PC-3 (cell line): ENCODE measurements at regions of chr4 and their contacts with region 1.

Region 1: DNA sequence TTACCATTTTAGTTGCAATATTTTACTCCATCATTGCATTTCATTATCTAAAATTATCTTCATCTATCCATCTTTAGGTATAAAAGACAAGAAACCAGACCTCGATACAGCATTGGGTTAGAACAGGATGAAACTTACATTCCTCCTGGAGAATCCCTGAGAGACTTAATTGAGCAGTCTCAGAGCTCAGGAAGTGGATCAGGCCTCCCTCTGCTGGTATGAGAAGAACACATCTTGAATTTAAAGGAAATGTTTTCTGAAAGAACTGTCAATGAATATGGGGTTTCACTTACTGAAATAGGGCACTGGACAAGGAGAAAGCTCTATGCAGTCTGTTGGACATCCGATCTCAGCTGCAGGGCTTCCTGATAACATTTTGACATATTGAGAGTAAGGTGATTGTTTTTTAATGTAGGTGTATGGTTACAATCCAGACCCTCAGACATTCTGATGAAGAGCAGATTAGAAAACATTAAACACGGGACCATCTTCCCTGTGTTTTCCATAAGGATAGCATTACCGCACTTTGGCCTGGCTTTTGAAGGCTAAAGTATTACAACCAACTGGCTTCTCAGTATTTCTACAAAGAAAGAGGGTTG is 367.2 kb downstream of the BMPR1B start:
- DNase-seq: peak; percentile 70
- ATAC-seq: peak; percentile 81
- H3K4me3 ChIP-seq: no peak overlapping the region
- H3K27ac ChIP-seq: no peak overlapping the region
- H3K4me1 ChIP-seq: peaks cover 4% of the 10 kb centered on the region
- H3K27me3 ChIP-seq: no peaks in the 10 kb centered on the region
- CTCF ChIP-seq: peak; percentile 74

Region 2: DNA sequence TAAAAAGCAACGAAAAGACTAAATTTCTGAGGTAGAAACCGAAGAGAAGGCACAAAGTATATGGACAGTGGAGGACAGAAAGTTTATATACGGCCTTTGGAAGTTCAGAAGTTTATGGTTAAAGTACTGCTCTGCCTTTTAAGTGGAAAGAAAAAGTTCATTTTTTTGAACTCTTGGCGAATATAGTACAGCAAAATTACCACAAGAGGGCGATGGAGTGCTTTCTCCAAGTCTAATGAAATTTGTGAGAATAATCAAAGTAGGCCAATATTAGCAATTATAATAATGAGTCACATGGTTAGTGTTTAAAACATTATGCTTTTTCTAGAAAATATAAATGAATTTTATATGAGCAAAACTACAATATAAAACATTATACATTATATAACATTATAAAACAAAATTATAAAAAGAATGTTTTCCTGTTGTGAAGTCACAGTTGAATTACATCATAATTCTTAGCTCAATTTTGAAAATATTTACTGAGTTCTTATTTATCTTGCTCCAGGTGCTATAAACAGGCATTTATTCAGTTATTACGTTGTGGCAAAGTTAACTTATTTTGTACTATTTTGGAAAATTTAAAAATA is 503.4 kb before region 1 on chr4:
- CTCF ChIA-PET with region 1: no interaction called
- POLR2A ChIA-PET with region 1: no interaction called
- intact Hi-C with region 1: loop called (anchors 1 kb)
- DNase-seq: peak; percentile 67
- ATAC-seq: peak; percentile 24; the same call in 1 of the 2 replicates
- H3K4me3 ChIP-seq: no peak overlapping the region
- H3K27ac ChIP-seq: no peak overlapping the region
- H3K4me1 ChIP-seq: peaks cover 4% of the 10 kb centered on the region; the same call in 1 of the 2 replicates
- H3K27me3 ChIP-seq: no peaks in the 10 kb centered on the region
- CTCF ChIP-seq: peak; percentile 74

Region 3: DNA sequence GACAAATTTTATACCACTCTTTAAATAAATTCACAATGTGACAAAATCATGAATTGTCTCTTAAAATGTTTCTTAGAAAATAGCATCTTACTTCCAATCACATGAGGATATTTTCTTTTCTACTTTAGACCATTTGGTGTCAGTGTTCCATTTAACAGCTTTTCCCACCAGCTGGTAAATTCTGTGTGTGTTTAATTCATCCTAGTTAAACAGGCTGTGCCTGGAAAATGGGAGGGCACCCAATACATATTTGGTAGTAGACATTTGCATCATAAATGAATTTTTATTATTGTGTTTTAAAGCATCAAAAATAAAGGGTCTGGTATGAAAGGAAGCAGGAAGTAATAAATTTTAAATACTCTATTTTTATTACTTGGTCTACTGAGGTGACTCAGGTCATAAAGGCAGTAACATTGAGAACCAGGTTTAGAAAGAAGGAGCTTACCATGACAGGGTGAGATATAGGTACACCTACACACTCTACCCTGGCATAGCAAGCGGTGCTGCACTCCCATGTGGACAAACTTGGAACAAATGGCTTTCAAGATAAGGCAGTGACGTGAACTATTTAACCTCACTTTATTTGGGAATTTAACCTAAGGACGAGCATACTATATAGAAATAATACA is 22.7 kb before region 1 on chr4:
- CTCF ChIA-PET with region 1: interaction called, 6 read pairs
- POLR2A ChIA-PET with region 1: interaction called, 3 read pairs
- intact Hi-C with region 1: loop called (anchors 1 kb)
- DNase-seq: peak; percentile 68
- ATAC-seq: peak; percentile 93
- H3K4me3 ChIP-seq: no peak overlapping the region
- H3K27ac ChIP-seq: peak overlapping the region; percentile 50
- H3K4me1 ChIP-seq: peaks cover 33% of the 10 kb centered on the region
- H3K27me3 ChIP-seq: no peaks in the 10 kb centered on the region
- CTCF ChIP-seq: 0 out of 2 replicates have a peak, but pooled peaks have one; percentile 37